Gastrocnemius medialis (tissue), 4 donors: ENCODE measurements at regions of chr15 and their contacts with region 1.

Region 1: DNA sequence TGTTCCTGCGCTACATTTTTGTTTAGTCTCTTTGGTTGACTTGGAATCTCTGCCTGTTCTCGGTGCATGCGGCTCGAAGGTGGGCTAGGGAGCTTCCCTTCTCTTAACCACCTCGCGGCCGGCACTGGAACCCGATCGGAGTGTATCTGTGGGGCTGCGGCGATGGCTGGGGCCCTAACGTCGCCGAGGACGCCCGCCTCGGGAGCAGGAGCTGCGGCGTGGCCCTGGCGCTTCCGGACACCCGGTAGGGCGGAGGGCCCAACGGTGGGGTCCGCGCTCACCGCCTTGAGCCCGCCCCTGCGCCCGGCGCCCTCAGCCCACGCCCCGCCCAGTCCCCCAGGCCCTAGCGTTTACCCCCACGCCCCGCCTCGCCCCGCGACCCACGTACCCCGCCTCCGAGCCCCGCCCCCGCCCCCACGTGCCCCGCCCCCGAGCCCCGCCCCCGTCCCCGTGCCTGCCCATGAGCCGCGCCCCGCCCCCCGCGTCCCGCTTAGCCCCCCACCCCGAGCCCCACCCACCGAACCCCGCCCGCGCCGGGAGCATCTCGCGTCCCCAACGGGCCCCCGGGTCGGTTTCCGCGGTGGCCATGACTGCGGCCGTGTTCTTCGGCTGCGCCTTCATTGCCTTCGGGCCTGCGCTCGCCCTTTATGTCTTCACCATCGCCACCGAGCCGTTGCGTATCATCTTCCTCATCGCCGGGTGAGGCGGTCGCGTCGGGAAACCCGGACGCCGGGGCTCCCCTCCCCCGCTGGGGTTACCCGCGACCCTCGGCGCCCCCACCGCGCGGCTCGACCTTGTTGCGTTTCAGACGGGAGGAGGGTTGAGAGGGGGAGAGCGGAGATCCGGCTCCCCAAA is at the start of gene APH1B:
- DNase-seq: peak; percentile 64 to 68
- ATAC-seq: peak; percentile 68 to 81
- H3K4me3 ChIP-seq: peak within 1 kb of the TSS; percentile 84 to 99 (median 92)
- H3K27ac ChIP-seq: peak within 1 kb of the TSS; percentile 82 to 89 (median 86)
- H3K4me1 ChIP-seq: peaks cover 0 to 3% of the 10 kb centered on the region in 2 donors
- H3K27me3 ChIP-seq: no peaks in the 10 kb centered on the region
- CTCF ChIP-seq: no peak
- POLR2A ChIP-seq: peak; percentile 26 to 53
- total RNA-seq, gene APH1B: 2.4 to 5.6 (median 2.9) TPM

Region 2: GRCh38 chr15:63157118-63157843 is 120.0 kb before region 1 on chr15 and contains the start of gene RPS27L:
- in situ Hi-C with region 1: loop called in 1 of 4 experiments (anchors 10 kb)
- intact Hi-C with region 1: loop called (anchors 2 kb)
- DNase-seq: peak; percentile 89
- ATAC-seq: peak; percentile 92 to 93
- H3K4me3 ChIP-seq: peak within 1 kb of the TSS; percentile 68 to 91 (median 89)
- H3K27ac ChIP-seq: peak within 1 kb of the TSS; percentile 86 to 98 (median 94)
- H3K4me1 ChIP-seq: peaks cover 13 to 28% of the 10 kb centered on the region in 2 donors
- H3K27me3 ChIP-seq: no peaks in the 10 kb centered on the region
- CTCF ChIP-seq: no peak
- POLR2A ChIP-seq: peak; percentile 84 to 87
- total RNA-seq, gene RPS27L: 53.0 to 145 (median 78.0) TPM

Region 3: DNA sequence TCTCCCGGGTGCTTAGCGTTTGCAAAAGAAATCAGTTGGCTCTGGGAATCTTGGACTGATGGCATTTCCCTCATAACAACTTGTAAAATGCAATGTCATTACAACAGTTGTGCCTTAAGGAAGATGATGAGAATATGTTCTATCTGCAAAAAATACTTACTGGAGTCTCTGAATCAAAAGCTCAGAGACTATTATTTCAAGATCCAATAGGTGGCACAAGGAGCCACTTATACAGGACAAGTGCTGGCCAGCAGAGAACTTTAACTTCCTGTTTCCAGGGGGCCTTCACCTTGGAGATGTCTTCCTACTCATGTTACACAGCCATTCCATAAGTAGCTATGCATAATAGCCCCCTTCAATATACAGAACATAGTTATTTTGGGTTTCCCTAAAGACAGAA is 111.0 kb before region 1 on chr15:
- in situ Hi-C with region 1: loop called in 1 of 4 experiments (anchors 10 kb)
- intact Hi-C with region 1: no loop called
- DNase-seq: no peak
- ATAC-seq: no peak
- H3K4me3 ChIP-seq: no peak overlapping the region
- H3K27ac ChIP-seq: no peak overlapping the region
- H3K4me1 ChIP-seq: peaks cover 13 to 31% of the 10 kb centered on the region in 2 donors
- H3K27me3 ChIP-seq: no peaks in the 10 kb centered on the region
- CTCF ChIP-seq: no peak
- POLR2A ChIP-seq: no peak